ENCODE measurements at regions of chr2 and their contacts with region 1.

Region 1: DNA sequence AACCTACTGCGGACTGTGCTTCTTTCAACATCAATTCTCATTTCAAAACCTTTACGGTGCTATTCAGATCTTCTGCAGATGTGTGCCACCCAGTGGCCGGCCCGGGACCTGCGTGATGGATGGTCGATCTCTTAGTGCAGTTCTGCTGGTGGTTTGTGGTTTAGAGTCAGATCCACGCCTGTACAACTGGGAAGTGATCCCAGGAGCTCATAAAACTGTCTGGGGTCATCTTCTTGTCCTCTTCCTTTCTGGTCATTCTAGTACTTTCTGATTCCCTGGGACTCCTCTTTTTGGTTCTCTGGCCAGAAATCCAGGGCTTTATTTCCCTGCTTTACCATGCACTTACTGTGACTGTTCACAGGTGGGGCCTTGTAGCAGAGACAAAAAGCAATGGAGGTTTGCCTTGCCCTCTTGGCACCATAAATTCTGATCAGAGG is 15.8 kb upstream of the SELENOI start:
- DNase-seq: peak; percentile 53
- H3K4me3 ChIP-seq: no peak overlapping the region
- H3K27ac ChIP-seq: no peak overlapping the region
- H3K27me3 ChIP-seq: peaks cover 5% of the 10 kb centered on the region
- CTCF ChIP-seq: peak; percentile 93

Region 2: GRCh38 chr2:25276569-25277465 is 1053.3 kb before region 1 on chr2:
- CTCF ChIA-PET with region 1: no interaction called
- POLR2A ChIA-PET with region 1: no interaction called
- DNase-seq: no peak
- H3K4me3 ChIP-seq: no peak overlapping the region
- H3K27ac ChIP-seq: no peak overlapping the region
- H3K27me3 ChIP-seq: no peaks in the 10 kb centered on the region
- CTCF ChIP-seq: peak; percentile 32

Region 3: GRCh38 chr2:26244309-26245121 is 85.6 kb before region 1 on chr2 and contains the starts of genes HADHA and HADHB:
- CTCF ChIA-PET with region 1: interaction called, 11 read pairs
- POLR2A ChIA-PET with region 1: interaction called, 6 read pairs
- DNase-seq: peak; percentile 76
- H3K4me3 ChIP-seq: peak within 1 kb of the TSS; percentile 97
- H3K27ac ChIP-seq: peak within 1 kb of the TSS; percentile 99
- H3K27me3 ChIP-seq: no peaks in the 10 kb centered on the region
- CTCF ChIP-seq: peak; percentile 37
- polyA plus RNA-seq, gene HADHA: 155 and 172 TPM in 2 replicates
- polyA plus RNA-seq, gene HADHB: 129 and 162 TPM in 2 replicates

Region 4: DNA sequence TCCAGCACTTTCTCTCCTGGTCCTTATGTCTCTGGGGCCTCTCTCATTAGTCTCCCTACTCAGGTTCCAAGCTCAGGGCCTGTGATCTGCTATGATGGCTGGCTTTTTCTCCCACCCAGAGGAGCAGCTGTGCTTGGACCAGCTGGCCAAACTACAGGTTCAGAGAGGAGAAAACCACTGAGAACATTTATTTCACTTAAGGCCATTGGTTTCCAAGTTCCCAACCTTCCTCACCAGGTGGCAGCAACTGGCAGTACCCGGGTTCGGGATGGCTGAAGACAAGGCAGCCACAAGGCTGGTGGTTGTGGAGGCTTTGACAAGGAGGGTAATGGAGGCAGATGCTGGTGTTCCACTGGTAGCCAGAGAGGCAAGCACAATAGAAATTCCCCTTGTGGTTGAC is 14.1 kb before region 1 on chr2:
- CTCF ChIA-PET with region 1: interaction called, 14 read pairs
- POLR2A ChIA-PET with region 1: no interaction called
- DNase-seq: no peak
- H3K4me3 ChIP-seq: no peak overlapping the region
- H3K27ac ChIP-seq: no peak overlapping the region
- H3K27me3 ChIP-seq: peaks cover 46% of the 10 kb centered on the region
- CTCF ChIP-seq: peak; percentile 22; the same call in 1 of the 2 replicates

Region 5: DNA sequence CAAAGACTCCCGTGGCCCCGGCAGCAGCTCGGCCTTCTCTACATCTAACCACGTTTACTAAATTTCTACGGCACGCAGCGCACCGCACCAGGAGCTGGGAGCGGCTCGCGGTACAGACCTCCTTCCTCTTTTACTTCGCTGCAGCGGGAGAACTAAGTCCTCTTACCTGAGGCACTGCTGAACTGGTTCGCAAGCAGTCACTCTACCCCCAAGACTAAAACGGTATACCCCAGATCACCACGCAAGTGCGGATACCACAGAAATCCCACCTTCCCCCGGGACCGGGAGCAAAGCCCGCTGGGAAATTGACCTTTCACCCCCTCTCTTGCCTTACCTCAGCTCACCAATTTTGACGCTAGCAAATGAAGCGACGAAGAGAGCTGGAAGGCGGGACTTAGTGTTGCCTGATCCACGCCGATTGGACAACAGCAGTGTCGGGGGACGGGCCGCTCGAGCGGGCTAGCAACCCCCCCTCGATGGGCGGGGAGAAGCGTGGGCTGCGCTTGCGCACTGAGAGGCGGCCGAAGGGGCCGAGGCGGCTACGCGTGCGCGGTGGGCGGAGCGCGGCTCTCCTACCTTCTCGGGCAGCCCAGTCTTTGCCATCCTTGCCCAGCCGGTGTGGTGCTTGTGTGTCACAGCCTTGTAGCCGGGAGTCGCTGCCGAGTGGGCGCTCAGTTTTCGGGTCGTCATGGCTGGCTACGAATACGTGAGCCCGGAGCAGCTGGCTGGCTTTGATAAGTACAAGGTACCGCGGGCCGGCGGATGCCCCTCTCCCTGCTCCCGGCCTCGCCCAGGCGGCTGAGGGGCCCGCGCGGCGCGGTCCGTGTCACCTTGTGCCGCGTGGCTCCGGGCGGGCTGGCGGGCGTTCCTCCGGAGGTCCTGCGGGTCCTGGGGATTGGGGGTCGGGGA is 15.7 kb after region 1 on chr2 and contains the start of gene SELENOI:
- CTCF ChIA-PET with region 1: interaction called, 12 read pairs
- POLR2A ChIA-PET with region 1: no interaction called
- DNase-seq: peak; percentile 98
- H3K4me3 ChIP-seq: peak within 1 kb of the TSS; percentile 94
- H3K27ac ChIP-seq: peak within 1 kb of the TSS; percentile 87
- H3K27me3 ChIP-seq: no peaks in the 10 kb centered on the region
- CTCF ChIP-seq: no peak
- polyA plus RNA-seq, gene SELENOI: 8.9 and 10.9 TPM in 2 replicates

Measured in AG04450 (cell line).